PC-3 (cell line): ENCODE measurements at regions of chr10 and their contacts with region 1.

Region 1: DNA sequence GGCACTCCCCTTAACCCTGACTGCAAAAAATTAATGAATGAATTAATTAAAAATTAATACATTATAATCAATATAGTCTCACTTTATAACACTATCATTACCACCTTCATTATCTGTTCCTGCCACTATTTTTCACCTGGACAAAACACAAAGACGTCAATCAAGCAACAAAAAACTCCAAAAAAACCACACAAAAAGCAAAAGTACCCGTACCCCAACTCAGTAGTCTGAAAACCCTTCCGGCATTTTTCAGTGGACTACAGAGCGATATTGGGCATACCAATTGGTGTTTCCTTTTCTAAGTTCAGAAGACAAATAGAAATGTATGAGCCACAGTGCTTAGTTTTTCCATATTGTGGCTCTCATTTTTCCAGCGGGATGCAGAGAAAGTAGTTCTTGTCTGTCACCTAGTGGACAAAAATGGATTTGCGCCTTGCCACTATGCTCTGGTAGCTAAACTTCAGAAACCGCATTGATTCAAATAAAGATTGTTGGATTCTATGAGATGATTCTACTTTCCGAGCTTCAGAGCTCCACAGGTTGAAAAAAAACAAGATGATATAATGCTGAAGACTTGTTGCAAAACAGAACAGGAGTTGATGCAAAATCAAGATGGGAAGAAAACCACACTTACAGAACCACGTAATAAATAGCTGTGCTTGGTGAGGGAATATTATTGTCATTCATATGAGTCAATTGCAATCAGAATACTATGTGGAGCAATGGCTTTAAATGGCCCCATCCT is 50.6 kb upstream of the ITGB1 start:
- DNase-seq: peak; percentile 100
- ATAC-seq: peak; percentile 12
- H3K4me3 ChIP-seq: peak overlapping the region; percentile 29
- H3K27ac ChIP-seq: peak overlapping the region; percentile 66
- H3K4me1 ChIP-seq: peaks cover 63% of the 10 kb centered on the region
- H3K27me3 ChIP-seq: no peaks in the 10 kb centered on the region
- CTCF ChIP-seq: peak; percentile 100

Region 2: GRCh38 chr10:32346134-32346550 is 662.5 kb before region 1 on chr10:
- CTCF ChIA-PET with region 1: no interaction called
- POLR2A ChIA-PET with region 1: interaction called, 9 read pairs
- intact Hi-C with region 1: loop called (anchors 5 kb)
- DNase-seq: peak; percentile 99
- ATAC-seq: peak; percentile 84
- H3K4me3 ChIP-seq: peak overlapping the region; percentile 87
- H3K27ac ChIP-seq: peak overlapping the region; percentile 96
- H3K4me1 ChIP-seq: peaks cover 36% of the 10 kb centered on the region
- H3K27me3 ChIP-seq: no peaks in the 10 kb centered on the region
- CTCF ChIP-seq: peak; percentile 99

Region 3: GRCh38 chr10:32713560-32713959 is 295.1 kb before region 1 on chr10:
- CTCF ChIA-PET with region 1: interaction called, 3 read pairs
- POLR2A ChIA-PET with region 1: no interaction called
- intact Hi-C with region 1: loop called (anchors 1 kb)
- DNase-seq: peak; percentile 69
- ATAC-seq: peak; percentile 82
- H3K4me3 ChIP-seq: no peak overlapping the region
- H3K27ac ChIP-seq: no peak overlapping the region
- H3K4me1 ChIP-seq: no peaks in the 10 kb centered on the region
- H3K27me3 ChIP-seq: no peaks in the 10 kb centered on the region
- CTCF ChIP-seq: peak; percentile 84

Region 4: DNA sequence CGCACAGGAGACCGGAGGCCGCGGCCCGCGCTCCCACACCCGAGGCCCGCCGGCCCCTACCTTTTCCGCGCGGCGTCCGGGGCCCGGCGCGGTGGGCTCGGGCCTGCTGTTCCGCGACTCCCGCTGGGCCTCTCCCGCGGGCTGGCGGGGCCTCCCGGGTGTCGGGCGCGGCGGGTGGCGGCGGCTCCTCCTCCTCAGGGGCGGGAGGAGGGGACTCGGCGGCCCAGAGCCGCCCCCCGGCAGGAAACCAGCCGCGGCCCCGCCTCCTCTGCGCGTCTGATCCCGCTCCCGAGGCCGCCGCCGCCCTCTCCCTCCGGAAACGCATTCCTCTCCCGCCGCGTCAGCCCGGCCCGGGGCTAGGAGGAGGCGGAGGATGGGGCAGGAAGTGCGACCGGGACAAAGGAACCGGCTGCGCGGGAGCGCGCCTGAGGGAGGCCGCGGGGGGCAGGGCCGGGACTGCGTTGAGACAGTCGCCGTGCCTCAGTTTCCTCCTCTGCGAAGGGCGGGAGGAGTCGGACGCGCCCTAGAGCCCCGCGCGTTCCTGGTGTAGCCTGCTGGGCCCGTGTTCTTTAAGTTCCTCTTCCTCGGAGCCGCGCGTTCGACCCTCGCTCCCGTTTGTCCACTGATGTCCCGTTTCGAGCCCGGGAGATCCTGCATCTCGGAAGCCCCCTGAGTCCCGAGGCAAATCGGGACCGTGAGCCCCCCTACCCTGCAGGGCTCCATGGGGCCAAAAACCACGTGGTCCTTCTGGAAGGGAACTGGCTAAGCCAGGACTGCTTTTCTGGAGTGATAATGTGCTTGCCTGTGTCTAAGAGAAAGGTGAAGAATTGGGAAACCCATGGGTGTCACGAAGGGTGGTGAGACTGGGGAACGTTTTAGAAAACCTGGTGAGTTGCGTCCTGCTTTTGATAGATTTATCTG is 50.3 kb before region 1 on chr10 and contains the start of gene ITGB1:
- CTCF ChIA-PET with region 1: interaction called, 9 read pairs
- POLR2A ChIA-PET with region 1: interaction called, 14 read pairs
- intact Hi-C with region 1: loop called (anchors 1 kb)
- DNase-seq: peak; percentile 100
- ATAC-seq: peak; percentile 77
- H3K4me3 ChIP-seq: peak within 1 kb of the TSS; percentile 75
- H3K27ac ChIP-seq: peak within 1 kb of the TSS; percentile 82
- H3K4me1 ChIP-seq: peaks cover 68% of the 10 kb centered on the region
- H3K27me3 ChIP-seq: no peaks in the 10 kb centered on the region
- CTCF ChIP-seq: no peak
- total RNA-seq, gene ITGB1: 956 and 1,010 TPM in 2 replicates

Region 5: GRCh38 chr10:33046792-33047191 is 38.1 kb after region 1 on chr10:
- CTCF ChIA-PET with region 1: no interaction called
- POLR2A ChIA-PET with region 1: no interaction called
- intact Hi-C with region 1: no loop called
- DNase-seq: no peak
- ATAC-seq: peak; percentile 45; the same call in 1 of the 2 replicates
- H3K4me3 ChIP-seq: no peak overlapping the region
- H3K27ac ChIP-seq: no peak overlapping the region
- H3K4me1 ChIP-seq: no peaks in the 10 kb centered on the region
- H3K27me3 ChIP-seq: no peaks in the 10 kb centered on the region
- CTCF ChIP-seq: no peak

Region 6: GRCh38 chr10:33087152-33087551 is 78.5 kb after region 1 on chr10:
- CTCF ChIA-PET with region 1: no interaction called
- POLR2A ChIA-PET with region 1: no interaction called
- intact Hi-C with region 1: no loop called
- DNase-seq: no peak
- ATAC-seq: no peak
- H3K4me3 ChIP-seq: no peak overlapping the region
- H3K27ac ChIP-seq: no peak overlapping the region
- H3K4me1 ChIP-seq: no peaks in the 10 kb centered on the region
- H3K27me3 ChIP-seq: no peaks in the 10 kb centered on the region
- CTCF ChIP-seq: no peak

Region 7: GRCh38 chr10:33115738-33116719 is 107.4 kb after region 1 on chr10:
- CTCF ChIA-PET with region 1: no interaction called
- POLR2A ChIA-PET with region 1: no interaction called
- intact Hi-C with region 1: loop called (anchors 1 kb)
- DNase-seq: peak; percentile 85
- ATAC-seq: peak; percentile 84
- H3K4me3 ChIP-seq: no peak overlapping the region
- H3K27ac ChIP-seq: peak overlapping the region; percentile 59
- H3K4me1 ChIP-seq: peaks cover 39% of the 10 kb centered on the region
- H3K27me3 ChIP-seq: no peaks in the 10 kb centered on the region
- CTCF ChIP-seq: peak; percentile 95

Region 8: DNA sequence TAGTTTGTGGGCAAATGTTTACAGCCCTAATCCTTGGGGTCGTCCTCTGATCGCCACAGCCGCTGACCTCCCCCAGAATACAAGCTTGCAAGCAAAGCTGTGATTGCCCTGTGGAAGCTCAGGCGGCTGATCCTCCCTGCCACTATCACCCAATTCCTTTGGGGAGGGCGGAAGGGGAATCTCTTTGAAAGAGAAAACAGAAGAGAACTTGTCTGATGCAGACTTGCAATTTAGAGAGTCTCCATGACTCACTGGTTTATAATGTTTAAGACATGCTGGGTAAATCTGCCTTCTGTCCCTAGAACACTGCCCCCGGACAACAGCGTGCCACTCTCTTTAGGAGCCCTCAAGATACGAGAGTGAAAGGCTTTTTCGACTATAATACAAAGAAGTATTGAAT is 250.3 kb after region 1 on chr10:
- CTCF ChIA-PET with region 1: no interaction called
- POLR2A ChIA-PET with region 1: no interaction called
- intact Hi-C with region 1: loop called (anchors 1 kb)
- DNase-seq: peak; percentile 98
- ATAC-seq: peak; percentile 52
- H3K4me3 ChIP-seq: no peak overlapping the region
- H3K27ac ChIP-seq: peak overlapping the region; percentile 65
- H3K4me1 ChIP-seq: peaks cover 86% of the 10 kb centered on the region
- H3K27me3 ChIP-seq: no peaks in the 10 kb centered on the region
- CTCF ChIP-seq: no peak